ENCODE measurements at regions of chr7 and their contacts with region 1.

Region 1: DNA sequence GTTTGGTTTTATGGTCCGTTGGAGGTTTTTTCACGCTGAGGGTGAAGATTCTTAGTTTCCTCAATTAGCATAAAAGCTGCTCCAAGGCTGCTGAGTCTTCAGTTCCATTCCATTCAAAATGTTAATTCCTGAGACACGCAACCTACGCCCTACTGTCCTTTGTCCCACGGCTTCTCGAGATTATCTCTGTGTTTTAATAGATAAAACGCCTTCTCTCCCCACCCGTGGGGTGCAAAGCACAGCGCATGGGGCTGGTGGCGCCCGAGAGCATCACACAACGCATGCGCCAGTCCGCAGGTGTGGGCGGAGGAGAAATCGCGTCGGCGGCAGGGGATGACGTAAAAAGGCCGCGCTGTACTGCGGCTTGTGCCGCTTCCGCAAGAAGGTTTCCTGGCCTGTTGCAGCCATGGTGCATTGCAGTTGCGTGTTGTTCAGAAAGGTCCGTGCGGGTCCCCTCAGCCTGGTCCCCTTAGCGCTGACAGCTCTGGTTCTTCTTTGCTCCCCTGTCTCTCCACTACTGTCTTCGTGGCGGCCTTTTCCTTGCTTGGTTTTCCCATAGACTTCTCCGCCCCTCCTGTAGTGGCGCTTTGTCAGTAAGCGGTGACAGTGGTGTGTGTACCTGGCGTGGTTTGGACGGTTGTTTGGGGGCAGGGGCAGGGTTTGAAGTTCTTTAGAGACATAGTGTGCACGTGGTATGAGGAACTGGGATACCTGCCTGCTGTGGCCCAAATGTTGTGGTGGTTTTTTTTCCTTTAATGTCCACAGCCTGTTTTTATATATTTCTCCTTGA is at the start of gene GTPBP10:
- DNase-seq: peak; percentile 95
- ATAC-seq: peak; percentile 95
- H3K4me3 ChIP-seq: peak within 1 kb of the TSS; percentile 96
- H3K27ac ChIP-seq: peak within 1 kb of the TSS; percentile 64
- H3K4me1 ChIP-seq: peaks cover 14% of the 10 kb centered on the region; the same call in 1 of the 2 replicates
- H3K27me3 ChIP-seq: no peaks in the 10 kb centered on the region
- CTCF ChIP-seq: peak; percentile 74
- total RNA-seq, gene GTPBP10: 13.0 and 23.5 TPM in 2 replicates

Region 2: GRCh38 chr7:89339748-89340147 is 1006.8 kb before region 1 on chr7:
- CTCF ChIA-PET with region 1: no interaction called
- POLR2A ChIA-PET with region 1: no interaction called
- intact Hi-C with region 1: no loop called
- DNase-seq: no peak
- ATAC-seq: no peak
- H3K4me3 ChIP-seq: no peak overlapping the region
- H3K27ac ChIP-seq: no peak overlapping the region
- H3K4me1 ChIP-seq: no peaks in the 10 kb centered on the region
- H3K27me3 ChIP-seq: no peaks in the 10 kb centered on the region
- CTCF ChIP-seq: no peak

Region 3: DNA sequence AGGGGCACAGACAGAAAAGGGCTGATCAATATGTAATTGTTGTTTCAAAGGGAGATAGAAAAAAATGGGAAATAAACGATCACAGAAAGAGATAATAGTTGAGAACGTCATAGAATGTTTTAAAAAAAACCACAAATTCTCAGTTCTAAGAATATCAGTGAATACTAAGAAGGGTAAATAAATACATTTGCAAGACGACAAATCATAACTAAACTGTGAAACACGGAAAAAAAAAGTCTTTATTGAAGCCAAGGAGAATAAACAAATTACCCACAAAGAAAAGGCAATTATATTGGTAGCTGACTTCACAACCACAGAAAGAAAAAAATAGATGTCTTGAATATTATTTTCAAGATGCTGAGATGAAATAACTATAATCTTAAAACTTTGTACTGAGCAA is 497.5 kb before region 1 on chr7:
- CTCF ChIA-PET with region 1: no interaction called
- POLR2A ChIA-PET with region 1: no interaction called
- intact Hi-C with region 1: no loop called
- DNase-seq: no peak
- ATAC-seq: no peak
- H3K4me3 ChIP-seq: no peak overlapping the region
- H3K27ac ChIP-seq: no peak overlapping the region
- H3K4me1 ChIP-seq: no peaks in the 10 kb centered on the region
- H3K27me3 ChIP-seq: 0 out of 2 replicates have a peak, but pooled peaks cover 3% of the 10 kb centered on the region
- CTCF ChIP-seq: no peak

Region 4: DNA sequence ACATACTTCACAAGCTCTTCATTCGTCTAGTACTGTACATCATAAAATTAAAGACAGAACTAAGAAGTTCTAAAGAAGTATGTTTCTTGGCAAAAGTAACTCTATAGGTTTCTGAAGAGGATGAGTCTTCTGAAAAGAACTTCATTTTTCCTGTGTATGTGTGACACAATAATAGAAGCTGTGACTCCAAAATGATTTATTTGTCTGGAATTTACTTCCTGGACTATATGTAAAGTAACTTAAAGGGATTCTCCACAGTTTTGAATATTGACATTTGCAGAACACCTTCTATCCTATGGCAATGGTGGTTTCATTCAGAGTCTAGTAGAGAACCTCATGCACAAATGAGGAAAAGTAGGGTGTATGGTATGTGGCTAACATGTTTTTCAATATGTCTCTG is 36.9 kb after region 1 on chr7:
- CTCF ChIA-PET with region 1: no interaction called
- POLR2A ChIA-PET with region 1: no interaction called
- intact Hi-C with region 1: loop called (anchors 2 kb)
- DNase-seq: peak; percentile 79
- ATAC-seq: peak; percentile 63
- H3K4me3 ChIP-seq: peak overlapping the region; percentile 36; the same call in 1 of the 2 replicates
- H3K27ac ChIP-seq: peak overlapping the region; percentile 83
- H3K4me1 ChIP-seq: peaks cover 52% of the 10 kb centered on the region
- H3K27me3 ChIP-seq: no peaks in the 10 kb centered on the region
- CTCF ChIP-seq: no peak

Region 5: DNA sequence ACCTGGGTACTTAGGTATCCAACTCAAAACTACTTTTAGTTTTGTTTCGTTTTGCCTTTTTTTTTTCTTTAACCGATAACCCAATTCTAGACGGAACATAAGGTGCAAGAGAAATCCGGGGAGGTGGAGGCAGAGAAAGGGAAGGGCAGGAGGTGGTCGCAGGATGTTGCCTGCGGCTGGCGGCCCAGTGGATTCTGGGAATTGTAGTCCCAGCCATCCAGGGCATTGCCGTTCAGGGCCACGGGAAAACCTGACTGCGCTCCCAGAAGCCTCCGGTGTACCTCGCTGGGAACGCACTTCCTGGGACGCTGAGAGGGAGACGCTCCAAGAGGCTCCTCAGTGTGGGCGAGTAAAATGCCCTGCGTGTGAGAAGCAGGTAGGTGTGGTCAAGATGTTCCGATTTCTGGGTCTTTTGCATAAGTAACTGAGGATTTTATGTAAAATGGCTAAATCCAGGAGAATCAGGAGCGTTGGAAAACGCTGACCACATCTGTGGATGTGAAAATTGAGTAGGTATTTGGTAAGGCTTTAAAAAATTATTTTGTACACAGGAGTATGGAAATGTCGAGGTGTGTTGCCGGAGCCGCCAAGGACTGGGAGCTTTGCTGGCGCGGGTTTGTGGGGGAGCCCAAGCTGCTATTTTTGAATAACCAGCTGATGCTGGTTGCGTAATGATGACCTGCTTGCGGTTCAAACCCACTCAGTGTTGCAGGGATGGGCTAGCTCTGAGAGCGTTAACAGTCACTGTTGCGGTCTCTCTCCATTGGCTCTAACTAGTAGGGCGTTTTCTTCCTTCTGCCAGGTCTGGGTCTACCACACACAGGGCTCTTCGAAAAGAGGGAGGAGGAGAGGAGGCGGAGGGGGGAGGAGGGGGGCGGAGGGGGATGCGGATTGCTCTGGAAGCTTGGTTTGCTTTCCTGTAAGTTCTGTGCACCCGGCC is 56.9 kb after region 1 on chr7 and contains the start of gene CLDN12:
- CTCF ChIA-PET with region 1: interaction called, 3 read pairs
- POLR2A ChIA-PET with region 1: no interaction called
- intact Hi-C with region 1: loop called (anchors 1 kb)
- DNase-seq: peak; percentile 88
- ATAC-seq: peak; percentile 98
- H3K4me3 ChIP-seq: peak within 1 kb of the TSS; percentile 76
- H3K27ac ChIP-seq: peak within 1 kb of the TSS; percentile 90
- H3K4me1 ChIP-seq: peaks cover 15% of the 10 kb centered on the region
- H3K27me3 ChIP-seq: no peaks in the 10 kb centered on the region
- CTCF ChIP-seq: no peak
- total RNA-seq, gene CLDN12: 12.7 and 14.7 TPM in 2 replicates

Measured in PC-3 (cell line).